Activated CD8-positive, alpha-beta T cell treated with anti-CD3 and anti-CD28 coated beads for 36 hours (primary cell): ENCODE measurements at regions of chr2 and their contacts with region 1.

Region 1: DNA sequence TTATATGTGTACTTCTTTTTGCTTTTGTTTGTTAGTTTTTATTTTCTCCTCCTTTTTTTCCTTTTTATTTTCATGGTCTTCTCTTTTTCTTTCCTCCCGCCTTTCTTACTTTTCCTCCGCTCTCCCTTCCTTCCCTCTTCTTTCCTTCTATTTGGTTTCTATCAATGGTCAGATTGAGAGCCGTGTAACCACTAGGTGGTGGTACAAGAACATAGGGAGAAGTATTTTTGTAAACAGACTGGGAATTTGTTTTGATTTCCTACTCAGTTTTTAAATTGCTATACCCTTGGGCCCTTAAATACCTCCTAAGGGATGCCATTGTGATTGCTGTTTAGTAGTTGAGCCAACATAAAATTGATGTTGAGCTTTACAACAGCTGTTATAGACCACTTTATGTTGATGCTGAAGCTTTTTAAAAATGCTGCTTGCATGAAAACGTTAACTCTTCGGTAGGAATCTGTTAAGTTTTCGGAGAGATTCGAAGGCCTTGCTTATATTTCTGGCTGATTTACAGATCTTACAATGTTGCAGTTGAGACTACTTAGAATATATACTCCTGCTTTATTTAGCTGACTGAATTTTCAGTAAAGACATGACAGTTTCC is 124.2 kb downstream of the UBE2E3 start:
- DNase-seq: peak; percentile 25
- ATAC-seq: no peak
- H3K4me3 Mint-ChIP-seq: peak overlapping the region; percentile 4
- H3K27ac Mint-ChIP-seq: peak overlapping the region; percentile 44
- H3K4me1 Mint-ChIP-seq: peaks cover 45% of the 10 kb centered on the region
- H3K27me3 Mint-ChIP-seq: no peaks in the 10 kb centered on the region
- CTCF ChIP-seq: peak; percentile 92

Region 2: GRCh38 chr2:181130686-181131085 is 26.1 kb after region 1 on chr2:
- CTCF ChIA-PET with region 1: interaction called, 11 read pairs
- POLR2A ChIA-PET with region 1: interaction called, 4 read pairs
- intact Hi-C with region 1: no loop called
- DNase-seq: no peak
- ATAC-seq: no peak
- H3K4me3 Mint-ChIP-seq: peak overlapping the region; percentile 71
- H3K27ac Mint-ChIP-seq: peak overlapping the region; percentile 84
- H3K4me1 Mint-ChIP-seq: peaks cover 67% of the 10 kb centered on the region
- H3K27me3 Mint-ChIP-seq: no peaks in the 10 kb centered on the region
- CTCF ChIP-seq: no peak

Region 3: GRCh38 chr2:181165199-181165868 is 60.7 kb after region 1 on chr2:
- CTCF ChIA-PET with region 1: interaction called, 5 read pairs
- POLR2A ChIA-PET with region 1: interaction called, 3 read pairs
- intact Hi-C with region 1: loop called (anchors 5 kb)
- DNase-seq: peak; percentile 56
- ATAC-seq: peak; percentile 87
- H3K4me3 Mint-ChIP-seq: peak overlapping the region; percentile 44
- H3K27ac Mint-ChIP-seq: peak overlapping the region; percentile 98
- H3K4me1 Mint-ChIP-seq: peaks cover 56% of the 10 kb centered on the region
- H3K27me3 Mint-ChIP-seq: no peaks in the 10 kb centered on the region
- CTCF ChIP-seq: no peak

Region 4: DNA sequence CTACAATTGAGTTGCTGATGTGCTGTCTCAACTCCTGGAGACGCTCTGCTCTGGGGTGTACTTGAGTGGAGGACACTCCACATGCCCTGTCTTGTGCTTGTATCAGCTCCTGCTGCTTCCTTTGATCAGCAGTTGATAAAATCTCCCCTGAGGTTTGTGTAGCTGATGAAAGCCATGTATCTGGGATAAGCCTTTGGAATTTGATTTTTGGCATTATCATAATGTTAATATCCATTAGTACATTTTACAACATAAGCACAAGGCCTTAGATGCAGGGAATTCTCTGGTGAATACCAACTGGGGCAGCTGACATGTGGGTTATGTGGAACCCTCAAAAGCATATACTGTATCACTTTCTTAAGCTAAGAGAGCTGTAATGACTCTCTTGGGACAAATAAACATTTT is 129.9 kb after region 1 on chr2:
- CTCF ChIA-PET with region 1: interaction called, 14 read pairs
- POLR2A ChIA-PET with region 1: no interaction called
- intact Hi-C with region 1: no loop called
- DNase-seq: no peak
- ATAC-seq: no peak
- H3K4me3 Mint-ChIP-seq: no peak overlapping the region
- H3K27ac Mint-ChIP-seq: no peak overlapping the region
- H3K4me1 Mint-ChIP-seq: peaks cover 34% of the 10 kb centered on the region
- H3K27me3 Mint-ChIP-seq: no peaks in the 10 kb centered on the region
- CTCF ChIP-seq: no peak

Region 5: GRCh38 chr2:181312515-181312927 is 207.9 kb after region 1 on chr2:
- CTCF ChIA-PET with region 1: interaction called, 15 read pairs
- POLR2A ChIA-PET with region 1: no interaction called
- intact Hi-C with region 1: loop called (anchors 5 kb)
- DNase-seq: peak; percentile 78
- ATAC-seq: peak; percentile 77
- H3K4me3 Mint-ChIP-seq: peak overlapping the region; percentile 83
- H3K27ac Mint-ChIP-seq: peak overlapping the region; percentile 100
- H3K4me1 Mint-ChIP-seq: peaks cover 52% of the 10 kb centered on the region
- H3K27me3 Mint-ChIP-seq: no peaks in the 10 kb centered on the region
- CTCF ChIP-seq: no peak

Region 6: DNA sequence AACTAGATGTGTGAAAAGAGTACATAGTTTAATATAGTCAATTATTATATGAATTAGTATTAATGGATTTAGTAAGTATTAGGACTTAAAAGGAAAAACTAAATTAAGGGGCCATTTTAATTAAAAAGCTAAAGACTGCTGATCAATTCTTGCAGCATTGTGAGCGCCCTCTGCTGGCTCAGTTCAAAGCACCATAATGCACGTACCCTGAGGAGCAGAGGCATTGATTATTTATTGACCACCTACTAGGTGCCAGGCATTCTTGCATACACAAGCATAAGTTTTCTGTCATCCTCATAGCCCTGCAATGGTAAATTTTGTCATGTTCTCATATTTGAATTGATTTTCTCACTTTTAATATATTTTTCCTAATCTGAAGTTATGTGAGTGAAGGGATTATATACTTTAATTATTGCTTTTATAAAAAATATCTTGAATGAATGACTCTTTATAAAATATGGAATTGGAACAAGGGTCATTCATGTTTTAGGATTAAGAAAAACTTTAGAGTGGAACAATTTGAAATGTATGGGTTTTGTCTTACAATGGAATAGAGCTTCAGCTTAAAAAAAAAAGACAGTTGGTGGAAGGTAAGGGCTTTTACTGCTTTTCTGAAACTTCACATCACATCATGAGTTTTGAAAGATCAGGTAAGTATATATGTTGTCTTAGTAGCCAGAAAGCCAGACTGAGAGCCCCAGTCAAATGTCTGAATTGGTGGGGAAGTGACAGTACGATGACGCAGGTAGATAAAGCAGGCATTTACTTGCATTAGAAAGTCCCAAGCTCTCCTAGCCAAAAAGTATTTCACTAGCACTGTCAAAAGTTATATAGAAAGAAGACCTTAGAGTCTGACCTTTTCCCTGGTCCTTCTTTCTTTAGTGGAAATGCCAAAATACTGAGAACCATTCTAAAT is 362.3 kb after region 1 on chr2:
- CTCF ChIA-PET with region 1: interaction called, 26 read pairs
- POLR2A ChIA-PET with region 1: interaction called, 3 read pairs
- intact Hi-C with region 1: no loop called
- DNase-seq: peak; percentile 94
- ATAC-seq: peak; percentile 41
- H3K4me3 Mint-ChIP-seq: peak overlapping the region; percentile 26
- H3K27ac Mint-ChIP-seq: peak overlapping the region; percentile 74
- H3K4me1 Mint-ChIP-seq: peaks cover 91% of the 10 kb centered on the region
- H3K27me3 Mint-ChIP-seq: no peaks in the 10 kb centered on the region
- CTCF ChIP-seq: peak; percentile 94